Activated CD4-positive, alpha-beta memory T cell treated with anti-CD3 and anti-CD28 coated beads, Interleukin-2, amount 10 ng/mL, durations not matched to agents 7 days and 5 days (primary cell): ENCODE measurements at regions of chr6 and their contacts with region 1.

Region 1: DNA sequence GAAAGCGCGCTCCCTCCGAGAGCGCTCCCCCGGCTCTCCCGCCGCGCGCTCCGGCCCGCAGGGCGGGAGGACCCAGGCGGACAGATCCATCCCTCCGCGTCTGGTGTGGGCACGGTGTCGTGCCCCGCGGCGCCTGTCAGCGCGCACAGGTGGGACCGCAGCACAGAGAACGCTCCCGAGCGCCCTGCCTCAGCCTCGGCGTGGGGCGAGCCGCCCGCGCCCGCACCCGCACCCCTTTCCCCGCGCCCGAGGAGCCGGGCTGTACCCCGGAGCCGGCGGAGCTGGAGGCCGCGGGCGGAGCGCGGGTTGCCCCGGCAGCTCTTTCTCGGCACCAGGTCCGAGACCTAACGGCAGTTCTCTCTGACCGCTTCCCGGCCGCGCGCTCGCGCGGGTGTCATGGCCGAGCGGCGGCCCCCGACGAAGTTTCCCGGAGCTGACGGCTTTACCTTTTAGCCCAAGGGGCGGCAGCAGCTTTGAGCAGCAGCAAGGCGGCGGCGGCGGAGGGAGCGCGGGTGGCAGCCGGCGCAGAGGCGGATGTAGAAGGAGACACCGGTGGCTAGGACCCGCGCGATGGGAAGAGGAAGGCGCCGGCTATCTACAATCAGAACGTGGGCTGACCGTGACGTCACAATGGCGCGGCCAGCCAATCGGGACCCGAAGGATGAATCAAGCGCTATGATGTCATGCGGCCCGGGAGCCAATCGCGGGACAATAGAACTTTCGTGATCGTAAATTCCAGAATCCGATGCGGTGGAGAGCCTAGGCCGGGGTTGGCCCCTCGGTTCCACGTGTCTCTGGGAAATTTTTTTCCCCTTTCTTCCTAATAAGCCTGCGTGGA is at the start of gene ELOVL5:
- DNase-seq: peak; percentile 98
- H3K4me3 Mint-ChIP-seq: peak within 1 kb of the TSS; percentile 97
- H3K27ac Mint-ChIP-seq: peak within 1 kb of the TSS; percentile 96
- H3K4me1 Mint-ChIP-seq: peaks cover 46% of the 10 kb centered on the region
- H3K27me3 Mint-ChIP-seq: peaks cover 15% of the 10 kb centered on the region
- total RNA-seq, gene ELOVL5: 157 to 162 TPM

Region 2: DNA sequence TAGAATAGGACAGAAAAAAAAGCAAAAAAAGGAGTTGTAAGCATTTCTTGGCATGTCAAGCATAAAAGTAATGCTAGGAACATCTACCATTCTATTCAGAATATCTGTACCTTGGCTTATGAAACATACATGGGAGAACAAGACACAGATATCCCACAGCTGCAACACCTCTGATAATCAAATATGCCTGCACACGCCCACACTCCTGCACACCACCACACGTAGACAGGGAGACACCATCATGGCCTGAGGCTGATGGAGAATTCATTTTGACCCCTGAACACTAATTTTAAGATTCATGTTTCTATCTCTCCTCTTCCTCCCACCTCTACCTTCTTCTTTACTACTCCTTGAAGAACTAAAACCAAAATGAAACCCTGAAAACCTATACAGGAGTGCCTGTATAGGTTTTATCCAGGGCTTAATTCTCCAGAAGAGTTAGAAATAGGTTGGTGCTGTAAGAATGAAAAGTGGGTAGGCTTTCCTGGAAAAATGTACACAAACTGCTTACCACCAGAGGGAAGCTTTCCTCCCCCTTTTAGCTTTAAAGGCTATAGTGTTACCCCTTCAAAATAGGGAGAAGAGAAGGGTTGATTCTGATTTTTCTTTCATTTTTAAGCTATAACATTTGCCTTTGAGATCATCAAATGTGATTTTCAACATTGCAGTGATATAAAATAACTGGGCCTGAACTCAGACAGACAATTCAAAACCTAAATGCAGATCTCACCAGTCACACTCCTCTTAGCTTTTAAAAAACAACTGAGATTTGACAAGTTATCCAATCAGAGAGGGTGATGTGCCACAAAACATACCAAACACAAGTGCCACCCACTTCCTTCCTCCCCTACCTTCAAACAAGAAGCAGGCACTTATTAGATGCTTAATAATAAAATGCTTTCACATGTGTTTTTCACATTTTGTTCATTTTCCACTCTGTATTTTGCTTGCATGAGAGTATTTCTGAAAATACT is 57.8 kb before region 1 on chr6:
- CTCF ChIA-PET with region 1: interaction called, 8 read pairs
- POLR2A ChIA-PET with region 1: interaction called, 29 read pairs
- DNase-seq: no peak
- H3K4me3 Mint-ChIP-seq: peak overlapping the region; percentile 1
- H3K27ac Mint-ChIP-seq: peak overlapping the region; percentile 63
- H3K4me1 Mint-ChIP-seq: peaks cover 58% of the 10 kb centered on the region
- H3K27me3 Mint-ChIP-seq: no peaks in the 10 kb centered on the region

Region 3: DNA sequence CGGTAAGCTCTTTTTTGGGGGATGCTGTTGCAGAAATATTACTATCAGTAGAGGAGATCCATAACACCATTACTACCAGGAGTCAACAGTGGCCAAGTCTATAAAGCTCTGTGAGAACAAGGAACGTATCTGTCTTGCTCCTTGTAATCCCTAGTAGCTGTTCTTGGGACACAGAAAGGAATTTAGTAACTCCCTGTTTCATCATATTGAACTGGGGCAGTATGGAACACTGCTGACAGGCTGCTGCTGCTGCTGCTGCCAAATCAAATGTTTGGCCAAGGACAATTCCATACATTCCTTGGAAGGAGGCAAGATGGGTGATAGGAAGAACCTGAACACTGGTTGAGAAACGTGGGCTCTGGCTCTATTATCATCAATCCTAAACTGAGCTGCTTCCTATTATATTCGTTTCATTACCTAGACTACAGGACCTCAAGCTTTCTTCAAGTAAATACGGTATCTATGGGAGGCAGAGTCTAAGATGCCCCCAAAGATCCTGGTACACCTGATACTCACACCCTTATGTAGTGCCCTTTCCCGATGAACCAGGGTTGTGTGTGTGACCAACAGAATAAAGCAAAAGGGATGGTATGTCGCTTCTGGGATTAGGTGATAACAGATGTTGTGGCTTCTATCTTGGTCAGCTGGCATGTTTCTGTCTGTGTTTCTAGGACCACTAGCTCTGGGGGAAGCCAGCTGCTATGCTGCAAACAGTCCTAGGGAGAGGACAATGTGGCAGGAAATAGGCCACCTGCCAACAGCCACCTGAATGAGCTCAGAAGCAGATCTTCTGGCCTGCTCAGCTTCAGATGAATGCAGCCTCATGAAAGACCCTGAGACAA is 39.3 kb before region 1 on chr6:
- CTCF ChIA-PET with region 1: interaction called, 4 read pairs
- POLR2A ChIA-PET with region 1: interaction called, 48 read pairs
- DNase-seq: no peak
- H3K4me3 Mint-ChIP-seq: no peak overlapping the region
- H3K27ac Mint-ChIP-seq: peak overlapping the region; percentile 41
- H3K4me1 Mint-ChIP-seq: peaks cover 82% of the 10 kb centered on the region
- H3K27me3 Mint-ChIP-seq: no peaks in the 10 kb centered on the region

Region 4: GRCh38 chr6:53335208-53335994 is 13.2 kb before region 1 on chr6:
- CTCF ChIA-PET with region 1: interaction called, 27 read pairs
- POLR2A ChIA-PET with region 1: interaction called, 93 read pairs
- DNase-seq: peak; percentile 73
- H3K4me3 Mint-ChIP-seq: peak overlapping the region; percentile 76
- H3K27ac Mint-ChIP-seq: peak overlapping the region; percentile 95
- H3K4me1 Mint-ChIP-seq: peaks cover 86% of the 10 kb centered on the region
- H3K27me3 Mint-ChIP-seq: no peaks in the 10 kb centered on the region

Region 5: DNA sequence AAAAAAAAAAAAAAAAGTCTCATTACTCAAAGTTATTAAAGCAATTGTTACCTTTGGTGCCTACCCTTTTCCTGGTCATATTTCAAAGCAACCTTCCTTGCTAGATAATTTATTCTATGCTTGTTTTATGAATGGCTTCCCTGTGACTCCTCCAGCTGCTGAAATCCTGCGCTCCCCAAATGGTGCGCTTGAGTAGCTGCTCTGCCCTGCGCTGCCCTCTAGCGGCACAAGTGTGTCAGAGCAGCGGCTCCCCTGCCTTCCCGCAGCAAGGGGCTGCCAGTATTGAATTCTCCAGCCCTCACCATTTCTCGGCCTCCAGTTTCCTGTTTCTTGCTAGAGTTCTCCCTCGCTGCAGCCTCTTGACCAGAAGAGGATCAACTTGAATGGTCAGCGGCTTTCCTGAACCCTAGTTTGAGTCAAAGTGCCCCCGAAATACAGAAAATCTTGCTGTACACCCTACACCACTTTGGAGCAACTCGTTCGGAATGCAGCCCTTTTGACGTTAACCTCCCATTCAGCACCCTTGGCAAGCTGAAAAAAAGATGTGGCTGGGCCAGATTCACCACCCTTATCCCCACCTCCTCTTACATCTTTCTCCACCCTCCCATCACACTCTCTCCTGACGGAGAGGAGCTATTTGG is 377.3 kb after region 1 on chr6:
- CTCF ChIA-PET with region 1: no interaction called
- POLR2A ChIA-PET with region 1: no interaction called
- DNase-seq: peak; percentile 79
- H3K4me3 Mint-ChIP-seq: no peak overlapping the region
- H3K27ac Mint-ChIP-seq: no peak overlapping the region
- H3K4me1 Mint-ChIP-seq: peaks cover 8% of the 10 kb centered on the region
- H3K27me3 Mint-ChIP-seq: peaks cover 16% of the 10 kb centered on the region